B cell (primary cell): ENCODE measurements at regions of chr11 and their contacts with region 1.

Region 1: GRCh38 chr11:128290106-128290840 is 297.1 kb downstream of the ETS1 start:
- DNase-seq: peak; percentile 91
- ATAC-seq: peak; percentile 71
- H3K4me3 ChIP-seq: peak overlapping the region in 4 of 5 experiments; percentile 33 to 48 (median 48)
- H3K4me3 Mint-ChIP-seq: peak overlapping the region; percentile 78
- H3K27ac ChIP-seq: peak overlapping the region; percentile 94 to 95
- H3K27ac Mint-ChIP-seq: peak overlapping the region; percentile 99
- H3K4me1 ChIP-seq: peaks cover 73 to 74% of the 10 kb centered on the region in 2 donors
- H3K4me1 Mint-ChIP-seq: peaks cover 95% of the 10 kb centered on the region
- H3K27me3 ChIP-seq: no peaks in the 10 kb centered on the region
- H3K27me3 Mint-ChIP-seq: no peaks in the 10 kb centered on the region
- CTCF ChIP-seq: peak; percentile 90

Region 2: GRCh38 chr11:128323381-128323780 is 33.1 kb after region 1 on chr11:
- CTCF ChIA-PET with region 1: interaction called, 9 read pairs
- POLR2A ChIA-PET with region 1: interaction called, 5 read pairs
- intact Hi-C with region 1: loop called (anchors 2 kb)
- DNase-seq: peak; percentile 52
- ATAC-seq: no peak
- H3K4me3 ChIP-seq: no peak overlapping the region
- H3K4me3 Mint-ChIP-seq: no peak overlapping the region
- H3K27ac ChIP-seq: no peak overlapping the region
- H3K27ac Mint-ChIP-seq: peak overlapping the region; percentile 66
- H3K4me1 ChIP-seq: peaks cover 32% of the 10 kb centered on the region in 2 donors
- H3K4me1 Mint-ChIP-seq: peaks cover 43% of the 10 kb centered on the region
- H3K27me3 ChIP-seq: no peaks in the 10 kb centered on the region
- H3K27me3 Mint-ChIP-seq: no peaks in the 10 kb centered on the region
- CTCF ChIP-seq: peak; percentile 34

Region 3: DNA sequence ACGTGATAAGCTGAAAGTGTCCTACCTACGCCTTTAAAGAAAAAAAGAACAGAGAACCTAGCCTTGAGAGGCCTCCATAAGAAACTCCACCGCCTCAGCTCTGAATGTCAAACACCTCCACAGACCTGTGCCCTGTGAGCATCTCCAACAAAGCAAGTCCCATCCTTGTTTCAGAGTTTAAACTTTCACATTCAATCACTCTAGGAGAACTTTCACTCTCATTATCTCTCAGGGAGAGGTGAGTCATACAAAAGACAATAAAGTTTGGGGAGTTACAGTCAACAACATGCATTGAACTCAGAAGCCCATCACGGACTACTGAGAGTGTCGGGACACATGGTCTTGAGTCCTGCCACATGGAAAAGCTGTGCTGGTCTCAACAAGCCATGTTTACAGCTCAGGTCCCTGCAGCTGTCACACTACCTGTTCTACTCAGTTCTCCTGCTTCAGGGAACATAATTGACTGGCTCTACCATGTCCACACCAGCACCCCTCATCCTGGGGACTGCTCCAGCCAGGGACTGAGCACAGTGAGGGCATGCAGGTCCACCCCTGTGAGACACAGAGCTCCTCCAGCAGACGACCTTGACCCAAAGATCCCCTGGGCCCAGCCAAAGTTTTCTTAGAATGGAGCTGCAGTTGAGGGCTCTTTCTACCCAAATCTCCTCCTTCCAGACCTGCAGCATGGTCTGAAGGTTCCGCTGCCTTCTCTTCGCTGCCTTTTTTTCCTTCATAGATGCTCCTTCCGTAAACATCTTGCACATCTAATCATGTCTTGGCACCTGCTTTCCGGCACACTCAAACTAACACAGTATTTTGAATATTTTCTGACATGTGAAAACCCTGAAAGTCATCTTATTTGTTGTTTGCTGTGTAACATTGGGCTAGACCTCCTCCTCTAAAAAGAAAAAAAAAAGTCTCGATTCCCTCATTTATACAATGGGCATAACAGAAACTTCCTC is 182.1 kb after region 1 on chr11:
- CTCF ChIA-PET with region 1: interaction called, 35 read pairs
- POLR2A ChIA-PET with region 1: interaction called, 6 read pairs
- intact Hi-C with region 1: loop called (anchors 1 kb)
- DNase-seq: peak; percentile 57
- ATAC-seq: peak; percentile 9
- H3K4me3 ChIP-seq: peak overlapping the region in 2 of 5 experiments; percentile 15 to 54
- H3K4me3 Mint-ChIP-seq: peak overlapping the region; percentile 71
- H3K27ac ChIP-seq: peak overlapping the region; percentile 74 to 90
- H3K27ac Mint-ChIP-seq: peak overlapping the region; percentile 89
- H3K4me1 ChIP-seq: peaks cover 98 to 100% of the 10 kb centered on the region in 2 donors
- H3K4me1 Mint-ChIP-seq: peaks cover 97% of the 10 kb centered on the region
- H3K27me3 ChIP-seq: no peaks in the 10 kb centered on the region
- H3K27me3 Mint-ChIP-seq: no peaks in the 10 kb centered on the region
- CTCF ChIP-seq: no peak

Region 4: GRCh38 chr11:128522055-128522942 is 232.0 kb after region 1 on chr11:
- CTCF ChIA-PET with region 1: interaction called, 51 read pairs
- POLR2A ChIA-PET with region 1: interaction called, 5 read pairs
- intact Hi-C with region 1: loop called (anchors 1 kb)
- DNase-seq: peak; percentile 92
- ATAC-seq: peak; percentile 91
- H3K4me3 ChIP-seq: peak overlapping the region; percentile 79 to 98 (median 90)
- H3K4me3 Mint-ChIP-seq: peak overlapping the region; percentile 92
- H3K27ac ChIP-seq: peak overlapping the region; percentile 82 to 90
- H3K27ac Mint-ChIP-seq: peak overlapping the region; percentile 98
- H3K4me1 ChIP-seq: peaks cover 31 to 34% of the 10 kb centered on the region in 2 donors
- H3K4me1 Mint-ChIP-seq: peaks cover 61% of the 10 kb centered on the region
- H3K27me3 ChIP-seq: no peaks in the 10 kb centered on the region
- H3K27me3 Mint-ChIP-seq: no peaks in the 10 kb centered on the region
- CTCF ChIP-seq: no peak

Region 5: GRCh38 chr11:128610721-128611617 is 320.7 kb after region 1 on chr11:
- CTCF ChIA-PET with region 1: interaction called, 57 read pairs
- POLR2A ChIA-PET with region 1: interaction called, 11 read pairs
- intact Hi-C with region 1: loop called (anchors 1 kb)
- DNase-seq: peak; percentile 95
- ATAC-seq: peak; percentile 89
- H3K4me3 ChIP-seq: peak overlapping the region in 3 of 5 experiments; percentile 20 to 61 (median 29)
- H3K4me3 Mint-ChIP-seq: peak overlapping the region; percentile 58
- H3K27ac ChIP-seq: peak overlapping the region; percentile 93 to 95
- H3K27ac Mint-ChIP-seq: peak overlapping the region; percentile 93
- H3K4me1 ChIP-seq: peaks cover 85 to 87% of the 10 kb centered on the region in 2 donors
- H3K4me1 Mint-ChIP-seq: peaks cover 89% of the 10 kb centered on the region
- H3K27me3 ChIP-seq: no peaks in the 10 kb centered on the region
- H3K27me3 Mint-ChIP-seq: no peaks in the 10 kb centered on the region
- CTCF ChIP-seq: no peak

Region 6: GRCh38 chr11:128831174-128832120 is 541.2 kb after region 1 on chr11:
- CTCF ChIA-PET with region 1: interaction called, 4 read pairs
- POLR2A ChIA-PET with region 1: no interaction called
- intact Hi-C with region 1: loop called (anchors 1 kb)
- DNase-seq: peak; percentile 88
- ATAC-seq: peak; percentile 89
- H3K4me3 ChIP-seq: peak overlapping the region; percentile 22 to 55 (median 36)
- H3K4me3 Mint-ChIP-seq: peak overlapping the region; percentile 74
- H3K27ac ChIP-seq: peak overlapping the region; percentile 60 to 78
- H3K27ac Mint-ChIP-seq: peak overlapping the region; percentile 90
- H3K4me1 ChIP-seq: peaks cover 66 to 68% of the 10 kb centered on the region in 2 donors
- H3K4me1 Mint-ChIP-seq: peaks cover 73% of the 10 kb centered on the region
- H3K27me3 ChIP-seq: no peaks in the 10 kb centered on the region
- H3K27me3 Mint-ChIP-seq: no peaks in the 10 kb centered on the region
- CTCF ChIP-seq: peak; percentile 93

Region 7: GRCh38 chr11:128886406-128887124 is 596.3 kb after region 1 on chr11:
- CTCF ChIA-PET with region 1: no interaction called
- POLR2A ChIA-PET with region 1: no interaction called
- intact Hi-C with region 1: no loop called
- DNase-seq: no peak
- ATAC-seq: no peak
- H3K4me3 ChIP-seq: no peak overlapping the region
- H3K4me3 Mint-ChIP-seq: no peak overlapping the region
- H3K27ac ChIP-seq: no peak overlapping the region
- H3K27ac Mint-ChIP-seq: no peak overlapping the region
- H3K4me1 ChIP-seq: peaks cover 15 to 22% of the 10 kb centered on the region in 2 donors
- H3K4me1 Mint-ChIP-seq: peaks cover 15% of the 10 kb centered on the region
- H3K27me3 ChIP-seq: peaks cover 0 to 76% (median 53%) of the 10 kb centered on the region in 4 experiments
- H3K27me3 Mint-ChIP-seq: peaks cover 78% of the 10 kb centered on the region
- CTCF ChIP-seq: no peak